Endothelial cell of umbilical vein (primary cell): ENCODE measurements at regions of chr10 and their contacts with region 1.

Region 1: DNA sequence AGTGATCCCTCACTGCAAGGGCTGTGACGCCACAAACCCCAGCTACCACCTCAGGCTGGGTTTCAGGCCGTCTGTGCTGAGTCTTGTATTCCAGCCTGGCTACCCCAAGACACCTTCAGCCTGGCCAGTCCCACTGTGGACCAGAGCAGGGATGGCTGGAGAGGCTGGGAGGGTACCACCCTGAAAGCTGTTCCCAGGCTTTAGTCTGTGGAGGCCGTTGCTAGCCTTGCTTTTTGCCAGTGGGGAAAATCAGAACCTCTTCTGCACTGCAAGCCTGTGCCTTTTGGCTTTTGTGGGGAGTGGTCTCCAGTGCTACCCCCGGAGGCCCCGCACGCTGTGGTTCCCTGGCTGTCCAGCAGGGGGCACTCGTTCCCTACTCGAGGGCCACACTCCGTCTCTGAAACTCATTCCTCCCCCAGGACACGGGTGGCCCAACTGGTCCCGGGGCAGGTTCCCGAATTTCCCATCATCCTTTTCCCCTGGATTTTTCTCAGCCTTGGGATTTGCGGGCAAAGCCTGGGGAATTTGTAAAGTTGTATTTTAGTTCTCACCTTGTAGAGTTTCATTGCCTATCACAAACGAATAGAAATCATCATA is 128.4 kb upstream of the BTBD16 start:
- DNase-seq: peak; percentile 43
- H3K4me3 ChIP-seq: no peak overlapping the region
- H3K27ac ChIP-seq: peak overlapping the region; percentile 99
- H3K4me1 ChIP-seq: peaks cover 45% of the 10 kb centered on the region
- H3K27me3 ChIP-seq: no peaks in the 10 kb centered on the region
- CTCF ChIP-seq: peak; percentile 87 to 97
- POLR2A ChIP-seq: no peak

Region 2: GRCh38 chr10:121974535-121975294 is 168.0 kb before region 1 on chr10 and contains the start of gene NSMCE4A:
- CTCF ChIA-PET with region 1: interaction called, 4 read pairs
- POLR2A ChIA-PET with region 1: no interaction called
- dilution Hi-C with region 1: no loop called
- intact Hi-C with region 1: loop called (anchors 1 kb)
- DNase-seq: peak; percentile 77
- H3K4me3 ChIP-seq: peak within 1 kb of the TSS; percentile 80 to 92 (median 85)
- H3K27ac ChIP-seq: peak within 1 kb of the TSS; percentile 81
- H3K4me1 ChIP-seq: peaks cover 10% of the 10 kb centered on the region
- H3K27me3 ChIP-seq: no peaks in the 10 kb centered on the region
- CTCF ChIP-seq: peak; percentile 73 to 87
- POLR2A ChIP-seq: peak; percentile 66
- total RNA-seq, gene NSMCE4A: 51.0 and 52.0 TPM in 2 replicates

Region 3: GRCh38 chr10:122044045-122044661 is 98.6 kb before region 1 on chr10:
- CTCF ChIA-PET with region 1: no interaction called
- POLR2A ChIA-PET with region 1: no interaction called
- dilution Hi-C with region 1: no loop called
- intact Hi-C with region 1: no loop called
- DNase-seq: no peak
- H3K4me3 ChIP-seq: no peak overlapping the region
- H3K27ac ChIP-seq: no peak overlapping the region
- H3K4me1 ChIP-seq: no peaks in the 10 kb centered on the region
- H3K27me3 ChIP-seq: peaks cover 3 to 7% of the 10 kb centered on the region in 2 experiments
- CTCF ChIP-seq: no peak
- POLR2A ChIP-seq: no peak

Region 4: GRCh38 chr10:122112625-122113160 is 30.0 kb before region 1 on chr10:
- CTCF ChIA-PET with region 1: interaction called, 45 read pairs
- POLR2A ChIA-PET with region 1: interaction called, 15 read pairs
- dilution Hi-C with region 1: no loop called
- intact Hi-C with region 1: loop called (anchors 1 kb)
- DNase-seq: peak; percentile 97
- H3K4me3 ChIP-seq: peak overlapping the region; percentile 49 to 59 (median 54)
- H3K27ac ChIP-seq: peak overlapping the region; percentile 100
- H3K4me1 ChIP-seq: peaks cover 42% of the 10 kb centered on the region
- H3K27me3 ChIP-seq: no peaks in the 10 kb centered on the region
- CTCF ChIP-seq: peak; percentile 43 to 53
- POLR2A ChIP-seq: peak; percentile 40

Region 5: GRCh38 chr10:122181055-122181732 is 38.5 kb after region 1 on chr10:
- CTCF ChIA-PET with region 1: interaction called, 4 read pairs
- POLR2A ChIA-PET with region 1: no interaction called
- dilution Hi-C with region 1: no loop called
- intact Hi-C with region 1: loop called (anchors 1 kb)
- DNase-seq: peak; percentile 21
- H3K4me3 ChIP-seq: no peak overlapping the region
- H3K27ac ChIP-seq: no peak overlapping the region
- H3K4me1 ChIP-seq: peaks cover 28% of the 10 kb centered on the region
- H3K27me3 ChIP-seq: no peaks in the 10 kb centered on the region
- CTCF ChIP-seq: no peak
- POLR2A ChIP-seq: no peak

Region 6: DNA sequence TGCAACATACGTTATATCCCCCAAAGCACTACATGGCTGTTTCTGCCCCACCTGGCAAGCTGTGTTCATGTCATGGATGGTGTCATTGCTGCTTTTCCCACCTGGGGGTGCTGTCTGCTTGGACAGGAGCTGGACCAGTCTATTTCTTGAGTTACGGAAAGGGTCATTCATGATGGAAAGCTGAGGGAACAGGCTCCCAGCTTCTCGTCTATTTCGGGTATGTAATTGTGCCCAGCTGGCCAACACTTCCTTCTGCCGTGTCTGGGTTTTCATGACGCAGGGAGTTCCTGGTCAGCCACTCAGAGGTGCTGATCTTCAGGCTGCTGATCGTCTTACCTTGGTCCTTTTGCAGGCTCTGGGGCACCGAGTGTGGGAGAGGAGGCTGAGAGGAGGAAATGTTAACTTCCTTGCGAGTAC is 137.0 kb after region 1 on chr10:
- CTCF ChIA-PET with region 1: interaction called, 10 read pairs
- POLR2A ChIA-PET with region 1: no interaction called
- dilution Hi-C with region 1: no loop called
- intact Hi-C with region 1: no loop called
- DNase-seq: peak; percentile 74
- H3K4me3 ChIP-seq: no peak overlapping the region
- H3K27ac ChIP-seq: no peak overlapping the region
- H3K4me1 ChIP-seq: peaks cover 2% of the 10 kb centered on the region
- H3K27me3 ChIP-seq: no peaks in the 10 kb centered on the region
- CTCF ChIP-seq: peak; percentile 77 to 81
- POLR2A ChIP-seq: no peak

Region 7: DNA sequence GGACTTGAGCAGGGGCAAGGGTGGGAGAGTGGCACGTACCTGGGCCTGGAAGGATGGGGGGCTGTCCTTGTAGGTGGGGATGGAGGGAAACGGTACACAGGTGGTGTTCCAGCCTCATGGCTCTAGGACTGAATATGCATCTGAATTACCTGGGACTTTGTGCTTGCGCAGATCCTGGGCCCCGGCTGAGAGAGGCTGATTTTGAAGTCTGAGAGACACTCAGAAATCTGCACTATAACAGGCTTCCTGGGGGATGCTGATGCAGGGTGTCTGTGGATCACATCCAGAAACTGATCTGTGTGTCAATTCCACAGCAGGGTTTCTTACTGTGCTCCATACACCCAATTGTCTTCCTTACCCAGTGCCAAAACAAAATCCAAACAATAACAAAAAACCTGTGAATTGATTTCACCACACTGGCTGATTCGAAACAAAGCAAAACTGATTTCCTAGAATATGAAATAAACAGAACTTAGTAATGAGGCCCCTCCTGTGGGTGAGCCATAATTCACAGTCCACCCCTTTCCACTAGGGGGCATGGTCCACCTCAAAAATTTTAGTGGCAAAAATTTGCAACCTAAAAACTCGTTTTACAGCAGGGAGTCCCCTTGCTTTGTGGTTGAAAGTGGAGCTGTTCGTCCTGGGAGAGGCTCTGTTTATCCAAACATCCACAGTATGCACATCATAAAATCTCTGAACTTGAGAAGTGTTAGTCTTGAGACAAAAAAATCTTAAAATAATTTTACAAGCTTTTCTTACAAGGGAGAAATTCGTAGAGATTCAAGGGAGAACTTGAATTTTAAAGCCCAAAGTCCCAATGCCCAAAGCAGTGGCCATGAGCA is 199.8 kb after region 1 on chr10:
- CTCF ChIA-PET with region 1: no interaction called
- POLR2A ChIA-PET with region 1: no interaction called
- dilution Hi-C with region 1: no loop called
- intact Hi-C with region 1: loop called (anchors 1 kb)
- DNase-seq: peak; percentile 71
- H3K4me3 ChIP-seq: no peak overlapping the region
- H3K27ac ChIP-seq: no peak overlapping the region
- H3K4me1 ChIP-seq: no peaks in the 10 kb centered on the region
- H3K27me3 ChIP-seq: no peaks in the 10 kb centered on the region
- CTCF ChIP-seq: peak; percentile 64 to 84
- POLR2A ChIP-seq: no peak

Region 8: GRCh38 chr10:122703439-122704118 is 560.8 kb after region 1 on chr10:
- CTCF ChIA-PET with region 1: no interaction called
- POLR2A ChIA-PET with region 1: no interaction called
- dilution Hi-C with region 1: no loop called
- intact Hi-C with region 1: loop called (anchors 2 kb)
- DNase-seq: peak; percentile 55
- H3K4me3 ChIP-seq: no peak overlapping the region
- H3K27ac ChIP-seq: no peak overlapping the region
- H3K4me1 ChIP-seq: no peaks in the 10 kb centered on the region
- H3K27me3 ChIP-seq: peaks cover 0 to 2% of the 10 kb centered on the region in 2 experiments
- CTCF ChIP-seq: peak; percentile 74 to 90
- POLR2A ChIP-seq: no peak